Heart right ventricle (tissue), 16 donors: ENCODE measurements at regions of chr3 and their contacts with region 1.

Region 1: DNA sequence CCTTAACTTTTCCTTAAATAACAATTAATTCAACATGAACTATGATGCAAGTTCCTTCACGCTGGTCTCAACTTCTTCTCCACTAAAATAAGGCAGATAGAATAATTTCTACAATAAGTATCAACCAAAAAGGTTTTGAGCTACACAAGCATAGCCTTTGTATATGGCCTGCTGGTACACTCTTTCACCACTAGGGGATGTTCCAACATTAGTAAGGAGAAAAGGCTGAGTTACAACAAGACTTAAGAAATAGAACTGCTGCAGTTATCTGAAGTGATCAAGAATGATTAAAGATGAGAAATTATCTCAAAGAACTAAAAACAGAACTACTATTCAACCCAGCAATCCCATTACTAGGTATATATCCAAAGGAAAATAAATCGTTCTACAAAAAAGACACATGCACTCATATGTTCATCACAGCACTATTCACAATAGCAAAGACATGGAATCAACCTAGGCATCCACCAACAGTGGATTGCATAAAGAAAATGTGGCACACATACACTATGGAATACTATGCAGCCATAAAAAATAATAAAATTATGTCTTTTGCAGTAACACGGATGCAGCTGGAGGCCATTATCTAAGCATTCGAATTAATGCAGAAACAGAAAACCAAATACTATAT is 14.4 kb downstream of the ATP13A3 start:
- DNase-seq: peak in 1 of 2 donors; percentile 33
- ATAC-seq: peak in 7 of 8 donors; percentile 41 to 77 (median 56)
- H3K4me3 ChIP-seq: no peak overlapping the region
- H3K27ac ChIP-seq: peak overlapping the region in 3 of 10 donors; percentile 6 to 66 (median 37)
- H3K4me1 ChIP-seq: peaks cover 0 to 95% (median 52%) of the 10 kb centered on the region in 9 donors
- H3K27me3 ChIP-seq: no peaks in the 10 kb centered on the region
- CTCF ChIP-seq: peak; percentile 92 to 99 (median 95)

Region 2: GRCh38 chr3:194592798-194593752 is 120.7 kb after region 1 on chr3:
- intact Hi-C with region 1: loop called in 9 of 10 experiments (anchors 1 to 10 kb)
- DNase-seq: no peak
- ATAC-seq: peak in 2 of 8 donors; percentile 24 to 50
- H3K4me3 ChIP-seq: no peak overlapping the region
- H3K27ac ChIP-seq: peak overlapping the region in 3 of 10 donors; percentile 46 to 53 (median 48)
- H3K4me1 ChIP-seq: peaks cover 0 to 27% (median 12%) of the 10 kb centered on the region in 9 donors
- H3K27me3 ChIP-seq: no peaks in the 10 kb centered on the region
- CTCF ChIP-seq: peak in 1 of 9 donors; percentile 12

Region 3: DNA sequence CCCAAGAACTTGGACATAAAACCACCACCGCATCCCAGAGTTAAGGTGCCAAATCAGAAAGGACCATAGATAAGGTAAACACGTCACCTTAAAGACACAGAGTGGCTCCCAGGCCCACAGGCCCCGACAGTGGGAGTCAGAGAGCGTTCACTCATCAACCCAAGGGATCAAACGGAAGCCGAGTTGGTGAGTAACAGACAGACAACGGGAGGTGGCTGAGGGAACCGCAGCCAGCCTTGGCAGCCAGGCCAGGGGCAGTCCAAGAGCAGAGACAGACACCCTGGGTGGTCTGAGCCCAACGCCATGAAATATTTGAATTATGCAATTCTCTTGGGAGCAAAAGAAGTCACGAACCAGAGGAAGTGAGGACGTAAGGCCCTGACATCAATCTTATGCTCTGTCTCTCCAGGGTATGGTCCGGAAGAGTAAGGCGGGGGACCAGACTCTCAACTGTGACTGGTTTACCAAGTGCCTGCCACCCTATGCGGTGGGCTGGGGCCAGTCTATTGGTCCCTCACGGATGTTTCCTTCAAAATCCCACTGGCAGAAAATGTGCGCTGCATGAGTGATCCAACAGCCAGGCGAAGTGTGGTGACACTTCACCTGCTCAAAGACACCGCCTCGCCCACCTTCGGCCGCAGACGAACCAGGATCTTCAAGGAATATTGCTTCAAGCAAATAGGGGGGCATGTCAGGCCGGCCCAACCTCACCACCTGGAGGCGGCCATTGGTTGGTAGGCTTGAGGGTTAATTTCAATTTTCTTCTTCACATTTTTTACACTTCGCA is 126.6 kb after region 1 on chr3:
- intact Hi-C with region 1: loop called in 9 of 10 experiments (anchors 1 to 10 kb)
- DNase-seq: no peak
- ATAC-seq: peak in 2 of 8 donors; percentile 32 to 67
- H3K4me3 ChIP-seq: no peak overlapping the region
- H3K27ac ChIP-seq: no peak overlapping the region
- H3K4me1 ChIP-seq: peaks cover 0 to 8% (median under 1%) of the 10 kb centered on the region in 9 donors
- H3K27me3 ChIP-seq: no peaks in the 10 kb centered on the region
- CTCF ChIP-seq: no peak

Region 4: DNA sequence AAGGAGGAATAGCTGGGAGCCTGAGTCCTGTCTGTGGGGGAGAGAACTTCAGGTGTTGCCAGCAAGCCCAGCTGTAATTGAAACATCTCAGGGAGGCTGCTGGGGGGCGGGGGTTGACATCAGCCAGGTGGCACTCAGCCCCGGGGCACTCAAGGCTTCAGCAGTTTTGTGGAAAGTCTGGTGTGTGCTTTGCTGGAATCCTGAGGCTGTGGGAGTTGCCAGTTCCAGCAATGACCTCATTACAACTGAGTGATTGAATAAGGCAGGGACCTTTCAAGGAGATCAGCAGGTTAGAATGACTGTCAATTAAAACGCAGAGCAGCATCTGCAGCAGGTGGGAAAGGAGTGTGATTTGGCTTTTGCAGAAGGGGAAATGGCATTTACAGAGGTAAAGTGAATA is 289.0 kb after region 1 on chr3:
- intact Hi-C with region 1: no loop called
- DNase-seq: no peak
- ATAC-seq: peak in 7 of 8 donors; percentile 31 to 71 (median 51)
- H3K4me3 ChIP-seq: no peak overlapping the region
- H3K27ac ChIP-seq: peak overlapping the region in 3 of 10 donors; percentile 10 to 33 (median 16)
- H3K4me1 ChIP-seq: peaks cover 0 to 32% (median 17%) of the 10 kb centered on the region in 9 donors
- H3K27me3 ChIP-seq: no peaks in the 10 kb centered on the region
- CTCF ChIP-seq: no peak

Region 5: DNA sequence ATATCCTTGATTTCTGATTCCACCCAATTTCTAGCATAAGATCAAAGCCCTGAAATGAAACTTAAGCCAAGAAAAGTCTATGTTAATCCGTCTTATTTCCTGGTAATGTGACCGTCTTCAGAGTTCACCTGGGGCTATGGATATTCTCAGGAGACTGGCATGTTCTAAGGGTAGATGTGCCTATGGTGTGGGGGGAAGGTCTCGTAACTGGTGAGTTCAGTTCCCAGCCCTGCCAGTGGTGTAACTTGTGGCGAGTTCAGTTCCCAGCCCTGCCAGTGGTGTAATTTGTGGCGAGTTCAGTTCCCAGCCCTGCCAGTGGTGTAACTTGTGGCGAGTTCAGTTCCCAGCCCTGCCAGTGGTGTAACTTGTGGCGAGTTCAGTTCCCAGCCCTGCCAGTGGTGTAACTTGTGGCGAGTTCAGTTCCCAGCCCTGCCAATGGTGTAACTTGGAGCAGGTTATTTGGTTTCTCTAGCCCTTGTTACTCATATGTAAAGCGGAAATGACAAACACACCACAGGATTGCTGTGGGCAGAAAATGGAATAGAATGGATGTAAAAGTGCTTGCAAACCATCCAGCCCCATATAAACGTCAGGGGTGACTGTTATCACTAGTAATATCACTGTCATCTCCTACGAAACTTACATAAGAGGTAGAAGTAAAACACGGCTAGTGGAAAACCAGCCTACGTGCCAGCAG is 1774.4 kb after region 1 on chr3:
- intact Hi-C with region 1: no loop called
- DNase-seq: no peak
- ATAC-seq: no peak
- H3K4me3 ChIP-seq: no peak overlapping the region
- H3K27ac ChIP-seq: peak overlapping the region in 1 of 10 donors; percentile 10
- H3K4me1 ChIP-seq: peaks cover 0 to 3% (median 0%) of the 10 kb centered on the region in 9 donors
- H3K27me3 ChIP-seq: no peaks in the 10 kb centered on the region
- CTCF ChIP-seq: no peak